Activated CD4-positive, alpha-beta memory T cell treated with anti-CD3 and anti-CD28 coated beads, Interleukin-2, amount 10 ng/mL, durations not matched to agents 7 days and 5 days (primary cell): ENCODE measurements at regions of chr17 and their contacts with region 1.

Region 1: GRCh38 chr17:2054512-2055291 is at the start of gene HIC1:
- DNase-seq: peak; percentile 85
- H3K4me3 Mint-ChIP-seq: peak within 1 kb of the TSS; percentile 79
- H3K27ac Mint-ChIP-seq: peak within 1 kb of the TSS; percentile 71
- H3K4me1 Mint-ChIP-seq: peaks cover 24% of the 10 kb centered on the region
- H3K27me3 Mint-ChIP-seq: peaks cover 17% of the 10 kb centered on the region
- total RNA-seq, gene HIC1: 38.3 to 39.8 TPM

Region 2: DNA sequence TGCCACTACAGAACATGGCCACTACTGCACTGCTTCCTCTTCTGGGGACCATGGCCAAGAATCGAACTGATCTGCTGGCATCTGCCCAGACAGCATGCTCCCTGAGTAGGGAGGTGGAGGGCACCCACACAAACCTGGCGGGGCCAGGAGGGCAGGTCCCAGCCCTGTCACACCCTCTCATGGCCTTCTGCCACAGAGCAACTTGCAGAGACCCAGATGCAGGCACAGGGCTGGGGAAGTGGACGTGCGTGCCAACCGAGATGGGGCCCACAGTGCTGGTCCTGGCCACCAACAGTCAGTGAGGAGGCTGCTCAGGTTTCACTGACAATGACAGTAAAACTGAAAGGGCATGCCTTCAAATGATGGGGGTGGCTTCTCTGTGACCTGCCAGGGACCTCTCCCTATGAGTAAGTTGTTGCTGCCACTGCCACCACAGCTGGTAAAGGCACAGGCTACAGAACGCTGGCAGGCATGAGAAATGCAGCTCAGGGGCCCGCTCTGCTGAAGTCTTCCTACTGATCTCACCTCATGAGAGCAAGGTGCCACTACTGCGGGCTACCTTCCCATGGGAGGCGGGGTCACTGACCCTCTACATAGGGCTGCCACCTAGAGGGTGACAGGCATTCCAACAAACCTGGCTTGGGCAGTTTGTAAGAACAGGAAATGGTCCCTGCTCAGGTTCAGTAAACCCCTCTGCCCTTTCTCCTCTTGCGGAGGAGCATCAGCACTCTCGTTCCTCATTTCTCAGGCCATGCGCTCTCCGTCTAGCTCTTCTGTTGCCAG is 15.7 kb after region 1 on chr17:
- CTCF ChIA-PET with region 1: interaction called, 37 read pairs
- POLR2A ChIA-PET with region 1: interaction called, 58 read pairs
- DNase-seq: peak; percentile 88
- H3K4me3 Mint-ChIP-seq: peak overlapping the region; percentile 33
- H3K27ac Mint-ChIP-seq: peak overlapping the region; percentile 90
- H3K4me1 Mint-ChIP-seq: peaks cover 81% of the 10 kb centered on the region
- H3K27me3 Mint-ChIP-seq: no peaks in the 10 kb centered on the region

Region 3: GRCh38 chr17:2222901-2223616 is 168.4 kb after region 1 on chr17:
- CTCF ChIA-PET with region 1: interaction called, 13 read pairs
- POLR2A ChIA-PET with region 1: interaction called, 4 read pairs
- DNase-seq: peak; percentile 73
- H3K4me3 Mint-ChIP-seq: no peak overlapping the region
- H3K27ac Mint-ChIP-seq: peak overlapping the region; percentile 55
- H3K4me1 Mint-ChIP-seq: peaks cover 40% of the 10 kb centered on the region
- H3K27me3 Mint-ChIP-seq: peaks cover 3% of the 10 kb centered on the region

Region 4: GRCh38 chr17:2259769-2260536 is 205.3 kb after region 1 on chr17:
- CTCF ChIA-PET with region 1: interaction called, 10 read pairs
- POLR2A ChIA-PET with region 1: interaction called, 50 read pairs
- DNase-seq: peak; percentile 85
- H3K4me3 Mint-ChIP-seq: peak overlapping the region; percentile 67
- H3K27ac Mint-ChIP-seq: peak overlapping the region; percentile 94
- H3K4me1 Mint-ChIP-seq: peaks cover 80% of the 10 kb centered on the region
- H3K27me3 Mint-ChIP-seq: no peaks in the 10 kb centered on the region

Region 5: GRCh38 chr17:2282297-2282873 is 227.7 kb after region 1 on chr17:
- CTCF ChIA-PET with region 1: interaction called, 63 read pairs
- POLR2A ChIA-PET with region 1: interaction called, 12 read pairs
- DNase-seq: no peak
- H3K4me3 Mint-ChIP-seq: no peak overlapping the region
- H3K27ac Mint-ChIP-seq: peak overlapping the region; percentile 56
- H3K4me1 Mint-ChIP-seq: peaks cover 48% of the 10 kb centered on the region
- H3K27me3 Mint-ChIP-seq: no peaks in the 10 kb centered on the region

Region 6: DNA sequence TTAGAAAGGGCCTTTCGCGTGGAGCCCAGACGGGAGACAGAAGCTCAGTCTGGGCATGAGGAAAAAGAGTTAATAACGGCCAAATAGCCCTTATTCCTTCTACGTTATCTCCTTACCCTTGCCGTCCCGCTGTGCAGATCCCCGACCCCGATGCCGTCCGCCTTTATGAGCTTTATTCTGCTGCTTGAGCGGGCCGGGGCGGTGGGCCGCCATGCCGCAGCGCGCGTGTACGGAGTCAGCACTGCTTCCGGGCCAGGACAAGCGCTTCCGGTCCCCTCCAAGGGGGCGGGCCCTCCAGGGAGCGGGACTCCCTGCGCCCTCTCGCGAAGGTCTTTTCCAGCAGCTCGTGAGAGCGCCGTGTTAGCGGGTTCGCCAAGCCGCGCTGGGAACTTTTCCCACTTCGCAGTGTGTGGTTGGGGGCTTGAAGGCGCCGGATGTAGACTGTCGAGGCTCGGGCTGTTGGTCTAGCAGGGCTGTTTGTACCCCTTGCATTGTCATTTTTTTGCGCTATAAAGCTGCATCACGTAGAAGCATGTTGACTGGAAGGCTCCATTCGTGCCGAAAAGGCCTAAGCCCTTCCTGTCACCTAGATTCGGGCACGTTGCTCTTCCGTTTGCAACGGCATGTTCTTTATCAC is 281.6 kb after region 1 on chr17 and contains the start of gene TSR1:
- CTCF ChIA-PET with region 1: interaction called, 5 read pairs
- POLR2A ChIA-PET with region 1: interaction called, 26 read pairs
- DNase-seq: peak; percentile 91
- H3K4me3 Mint-ChIP-seq: peak within 1 kb of the TSS; percentile 99
- H3K27ac Mint-ChIP-seq: peak within 1 kb of the TSS; percentile 88
- H3K4me1 Mint-ChIP-seq: peaks cover 8% of the 10 kb centered on the region
- H3K27me3 Mint-ChIP-seq: no peaks in the 10 kb centered on the region
- total RNA-seq, gene TSR1: 22.5 to 23.5 TPM

Region 7: GRCh38 chr17:2412561-2413021 is 357.9 kb after region 1 on chr17:
- CTCF ChIA-PET with region 1: no interaction called
- POLR2A ChIA-PET with region 1: no interaction called
- DNase-seq: no peak
- H3K4me3 Mint-ChIP-seq: no peak overlapping the region
- H3K27ac Mint-ChIP-seq: no peak overlapping the region
- H3K4me1 Mint-ChIP-seq: peaks cover 2% of the 10 kb centered on the region
- H3K27me3 Mint-ChIP-seq: no peaks in the 10 kb centered on the region